ENCODE measurements at regions of chr14 and their contacts with region 1.

Region 1: DNA sequence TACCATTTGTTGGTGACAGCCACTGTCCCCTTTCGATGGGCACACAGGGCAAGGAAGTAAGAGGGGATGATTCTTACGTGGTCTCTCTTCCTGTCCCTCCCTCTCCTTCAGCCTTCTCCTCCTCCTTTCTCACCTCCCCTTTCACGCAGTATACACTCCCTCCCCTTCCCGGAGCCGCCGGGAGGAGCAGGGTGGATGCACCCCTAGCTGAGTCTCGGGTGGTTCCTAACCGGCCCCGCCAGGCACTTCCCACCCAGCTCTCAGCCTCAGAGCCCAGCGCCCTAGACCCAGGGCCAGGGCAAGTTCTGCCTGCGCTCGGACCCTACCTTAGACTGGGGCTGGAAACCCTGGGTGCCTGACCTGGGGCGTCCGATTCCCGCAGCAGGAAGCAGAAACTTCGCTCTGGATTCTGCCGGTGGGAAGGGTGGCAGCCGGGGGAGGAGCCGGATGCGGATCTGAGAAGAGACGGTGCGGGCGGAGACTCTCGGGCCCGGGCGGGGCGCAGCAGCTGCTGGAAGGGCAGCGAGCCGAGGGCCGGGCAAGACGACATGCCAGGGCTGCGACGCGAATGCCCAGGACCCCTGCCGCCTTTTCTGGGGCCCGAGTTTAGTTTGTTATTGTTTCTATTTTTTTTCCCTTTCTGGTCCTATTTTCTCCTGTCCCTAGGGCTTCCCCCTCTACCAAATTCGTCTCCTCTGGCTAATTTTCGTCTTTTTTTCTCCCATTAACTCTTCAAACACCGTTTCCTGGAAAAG is at the start of gene TEP1:
- DNase-seq: peak; percentile 95
- ATAC-seq: peak; percentile 96
- total RNA-seq, gene TEP1: 8.2 TPM

Region 2: GRCh38 chr14:20343092-20343861 is 69.9 kb before region 1 on chr14 and contains the start of gene PARP2:
- intact Hi-C with region 1: loop called (anchors 1 kb)
- DNase-seq: peak; percentile 98
- ATAC-seq: peak; percentile 98
- total RNA-seq, gene PARP2: 15.7 TPM

Region 3: GRCh38 chr14:20454516-20455354 is 41.5 kb after region 1 on chr14 and contains the starts of genes APEX1 and OSGEP:
- intact Hi-C with region 1: loop called (anchors 1 kb)
- DNase-seq: peak; percentile 99
- ATAC-seq: peak; percentile 97
- total RNA-seq, gene APEX1: 67.2 TPM
- total RNA-seq, gene OSGEP: 18.8 TPM

Region 4: GRCh38 chr14:20644520-20644919 is 231.3 kb after region 1 on chr14:
- intact Hi-C with region 1: no loop called
- DNase-seq: no peak
- ATAC-seq: no peak

Measured in Right ventricle myocardium inferior (tissue), 1 donor.